ENCODE measurements at regions of chr10 and their contacts with region 1.

Region 1: DNA sequence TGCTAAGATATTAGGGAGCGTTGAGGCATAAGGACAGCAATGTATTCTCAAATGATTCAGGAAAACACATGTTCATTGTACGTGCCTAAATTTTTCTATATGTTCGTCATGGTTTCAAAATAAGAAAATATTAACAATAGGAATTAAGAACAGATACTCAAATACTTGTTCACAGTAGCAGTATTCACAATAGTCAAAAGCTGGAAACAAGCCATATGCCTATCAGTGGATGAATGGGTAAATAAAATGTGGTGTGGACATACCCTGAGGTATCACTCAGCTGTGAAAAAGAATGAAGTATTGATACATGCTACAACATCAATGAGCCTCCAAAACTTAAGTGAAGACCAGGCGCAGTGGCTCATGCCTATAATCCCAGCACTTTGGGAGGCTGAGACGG is 84.7 kb upstream of the PTER start:
- DNase-seq: no peak
- ATAC-seq: no peak
- H3K4me3 ChIP-seq: no peak overlapping the region
- H3K27ac ChIP-seq: no peak overlapping the region
- H3K4me1 ChIP-seq: no peaks in the 10 kb centered on the region
- H3K27me3 ChIP-seq: peaks cover 0 to 5% (median 0%) of the 10 kb centered on the region in 9 donors
- CTCF ChIP-seq: no peak
- POLR2A ChIP-seq: no peak

Region 2: GRCh38 chr10:16155834-16156233 is 196.3 kb before region 1 on chr10:
- intact Hi-C with region 1: loop called in 1 of 10 experiments (anchors 10 kb)
- DNase-seq: no peak
- ATAC-seq: no peak
- H3K4me3 ChIP-seq: no peak overlapping the region
- H3K27ac ChIP-seq: no peak overlapping the region
- H3K4me1 ChIP-seq: no peaks in the 10 kb centered on the region
- H3K27me3 ChIP-seq: no peaks in the 10 kb centered on the region
- CTCF ChIP-seq: no peak
- POLR2A ChIP-seq: no peak

Region 3: GRCh38 chr10:16314259-16314658 is 37.9 kb before region 1 on chr10:
- intact Hi-C with region 1: no loop called
- DNase-seq: no peak
- ATAC-seq: no peak
- H3K4me3 ChIP-seq: no peak overlapping the region
- H3K27ac ChIP-seq: no peak overlapping the region
- H3K4me1 ChIP-seq: no peaks in the 10 kb centered on the region
- H3K27me3 ChIP-seq: no peaks in the 10 kb centered on the region
- CTCF ChIP-seq: no peak
- POLR2A ChIP-seq: no peak